Calu3 (cell line): ENCODE measurements at regions of chr11 and their contacts with region 1.

Region 1: DNA sequence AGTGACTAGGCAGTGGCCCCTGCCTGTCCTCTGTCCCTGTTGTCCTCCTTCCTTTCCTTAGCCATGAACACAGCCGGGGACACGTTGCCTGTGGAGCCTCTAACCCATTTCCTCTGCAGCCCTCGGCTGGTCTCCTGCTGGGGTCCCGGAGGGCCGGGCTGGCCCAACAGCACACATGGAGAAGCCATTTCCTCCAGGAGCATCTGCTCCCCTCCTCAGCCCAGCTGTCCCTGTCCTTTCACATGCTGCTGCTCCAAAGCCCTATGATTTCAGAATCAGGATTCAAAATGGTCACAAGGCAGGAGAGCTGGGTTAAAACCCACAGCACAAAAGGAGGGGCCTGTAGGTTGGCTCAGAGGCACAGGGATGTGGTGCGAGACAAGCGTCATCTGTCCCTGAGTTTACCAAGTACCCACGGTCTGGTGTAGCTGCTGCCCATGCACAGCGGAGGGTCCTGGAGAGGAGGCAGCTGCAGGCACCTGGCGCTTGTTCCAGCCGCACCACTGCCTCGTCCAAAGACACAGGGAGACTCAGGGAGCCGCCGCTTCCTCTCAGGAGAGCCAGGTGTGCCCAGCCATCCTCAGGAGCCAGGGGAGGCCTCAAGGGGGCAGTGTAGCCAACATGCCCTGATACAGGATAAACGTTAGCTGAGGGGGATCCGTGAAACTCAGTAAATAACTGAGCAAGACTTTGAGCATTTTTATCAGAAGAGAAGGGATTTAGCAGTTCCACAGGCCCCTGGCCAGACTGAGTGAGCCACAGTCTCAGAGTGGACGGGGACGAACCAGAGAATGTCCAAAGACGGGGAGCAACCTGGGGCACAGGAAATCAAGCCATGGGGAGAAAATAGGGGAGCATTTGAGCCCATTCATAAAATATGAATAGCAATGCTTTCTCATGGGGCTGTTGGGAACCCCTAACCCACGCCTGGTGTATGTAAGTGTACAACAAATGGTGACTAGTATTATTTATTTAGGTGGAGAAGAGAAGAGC is 3.9 kb upstream of the VSIG10L2 start:
- DNase-seq: peak; percentile 66
- H3K4me3 Mint-ChIP-seq: no peak overlapping the region
- H3K27ac Mint-ChIP-seq: no peak overlapping the region
- H3K4me1 Mint-ChIP-seq: peaks cover 6% of the 10 kb centered on the region
- H3K27me3 Mint-ChIP-seq: peaks cover 12% of the 10 kb centered on the region
- CTCF ChIP-seq: peak; percentile 29

Region 2: GRCh38 chr11:126062679-126063506 is 121.0 kb after region 1 on chr11 and contains the start of gene CDON:
- CTCF ChIA-PET with region 1: interaction called, 9 read pairs
- intact Hi-C with region 1: loop called (anchors 5 kb)
- DNase-seq: peak; percentile 90
- H3K4me3 Mint-ChIP-seq: peak within 1 kb of the TSS; percentile 81
- H3K27ac Mint-ChIP-seq: peak within 1 kb of the TSS; percentile 96
- H3K4me1 Mint-ChIP-seq: peaks cover 8% of the 10 kb centered on the region
- H3K27me3 Mint-ChIP-seq: no peaks in the 10 kb centered on the region
- CTCF ChIP-seq: no peak
- total RNA-seq, gene CDON: 10.6 and 14.8 TPM in 2 replicates

Region 3: DNA sequence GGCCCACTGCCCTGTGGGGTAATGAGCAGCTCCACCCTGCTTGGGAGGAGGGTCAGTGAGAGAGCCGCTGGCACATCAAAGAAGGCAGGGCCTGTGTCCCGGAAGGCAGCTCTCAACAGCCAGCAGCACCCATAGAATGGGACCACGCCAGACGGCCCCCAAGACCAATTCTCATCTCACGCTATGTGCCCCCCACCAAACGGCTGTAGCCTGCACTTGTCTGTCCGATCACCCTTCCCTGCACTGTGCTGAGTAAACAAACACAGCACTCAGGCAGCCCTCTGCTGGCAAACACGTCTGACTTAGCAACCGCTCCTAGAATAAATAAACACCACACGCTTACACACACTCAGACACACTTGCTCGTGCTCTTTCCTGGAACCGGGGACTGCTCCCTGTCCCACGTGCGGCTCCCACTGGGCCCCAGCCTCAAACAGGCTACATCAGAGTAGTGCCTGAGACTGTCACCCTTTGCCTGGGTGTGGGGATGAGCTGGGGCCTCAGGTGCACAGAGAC is 174.0 kb after region 1 on chr11:
- CTCF ChIA-PET with region 1: interaction called, 3 read pairs
- intact Hi-C with region 1: loop called (anchors 5 kb)
- DNase-seq: peak; percentile 65
- H3K4me3 Mint-ChIP-seq: peak overlapping the region; percentile 21
- H3K27ac Mint-ChIP-seq: peak overlapping the region; percentile 35
- H3K4me1 Mint-ChIP-seq: peaks cover 16% of the 10 kb centered on the region
- H3K27me3 Mint-ChIP-seq: no peaks in the 10 kb centered on the region
- CTCF ChIP-seq: no peak

Region 4: GRCh38 chr11:126732981-126733380 is 791.1 kb after region 1 on chr11:
- CTCF ChIA-PET with region 1: interaction called, 11 read pairs
- intact Hi-C with region 1: no loop called
- DNase-seq: no peak
- H3K4me3 Mint-ChIP-seq: no peak overlapping the region
- H3K27ac Mint-ChIP-seq: no peak overlapping the region
- H3K4me1 Mint-ChIP-seq: no peaks in the 10 kb centered on the region
- H3K27me3 Mint-ChIP-seq: peaks cover 43% of the 10 kb centered on the region
- CTCF ChIP-seq: no peak